Dorsolateral prefrontal cortex (tissue), 120 donors: ENCODE measurements at regions of chr13 and their contacts with region 1.

Region 1: DNA sequence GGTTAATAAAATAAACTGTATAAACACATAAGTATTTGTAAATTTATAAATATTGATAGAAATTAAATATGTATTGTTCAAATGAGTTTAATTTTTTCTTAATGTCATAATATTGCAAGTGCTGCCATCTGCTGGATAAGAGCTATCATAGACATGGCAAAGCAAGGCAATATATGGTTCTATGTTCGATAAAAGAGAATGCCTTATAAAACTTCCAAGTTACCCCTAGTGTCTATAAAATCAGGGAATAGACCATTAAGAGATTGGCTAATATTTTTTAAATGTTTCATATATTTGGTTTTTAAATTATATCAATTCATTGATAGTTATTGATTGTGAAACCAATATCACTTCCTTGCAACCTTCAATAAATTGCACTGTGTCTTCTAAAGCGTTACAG is 28.9 kb upstream of the SLITRK6 start:
- DNase-seq: no peak
- H3K4me3 ChIP-seq: peak overlapping the region in 10 of 59 donors; percentile 7 to 34 (median 24)
- H3K27ac ChIP-seq: no peak overlapping the region
- H3K27me3 ChIP-seq: peaks cover 0 to 4% (median 0%) of the 10 kb centered on the region in 45 donors
- CTCF ChIP-seq: peak; percentile 47 to 83 (median 71)

Region 2: DNA sequence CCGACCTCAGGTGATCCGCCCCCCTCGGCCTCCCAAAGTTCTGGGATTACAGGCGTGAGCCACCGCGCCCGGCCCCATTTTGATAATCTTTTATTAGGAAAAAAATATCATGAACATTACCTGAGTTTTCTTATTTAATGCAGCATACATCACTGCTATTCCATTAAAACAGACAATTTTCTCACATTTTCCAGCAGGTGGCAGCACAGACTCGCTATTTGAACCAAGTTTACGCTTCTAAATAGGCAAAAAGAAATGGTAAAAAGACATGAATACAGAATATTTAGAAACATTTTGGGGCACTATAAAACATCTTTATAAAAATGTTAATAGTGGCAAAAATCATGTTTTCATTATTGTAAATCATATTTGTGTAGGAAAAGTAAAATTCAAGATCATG is 932.0 kb before region 1 on chr13:
- intact Hi-C with region 1: loop called in 1 of 2 experiments (anchors 5 kb)
- DNase-seq: peak in 2 of 10 donors; percentile 28 to 33
- H3K4me3 ChIP-seq: no peak overlapping the region
- H3K27ac ChIP-seq: no peak overlapping the region
- H3K27me3 ChIP-seq: no peaks in the 10 kb centered on the region
- CTCF ChIP-seq: peak; percentile 60 to 85 (median 74)

Region 3: DNA sequence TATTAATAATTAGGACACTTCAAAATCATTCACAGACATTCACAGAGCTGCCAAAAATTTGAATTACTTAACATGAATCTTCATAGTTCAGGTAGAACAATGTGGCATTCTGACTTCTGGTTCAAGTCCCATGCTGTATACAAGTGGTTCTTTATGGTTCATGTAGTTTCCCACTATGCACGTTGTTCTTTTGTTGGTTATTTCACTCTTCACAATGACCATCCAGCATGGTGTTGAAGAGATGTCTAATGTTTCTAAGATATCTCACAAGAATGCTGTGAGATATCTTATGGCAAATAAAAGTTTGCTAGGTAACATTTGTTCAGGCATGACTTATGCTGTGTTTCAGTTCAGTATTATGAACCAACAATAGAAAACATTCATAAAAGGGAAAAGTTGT is 59.3 kb after region 1 on chr13:
- intact Hi-C with region 1: no loop called
- DNase-seq: no peak
- H3K4me3 ChIP-seq: no peak overlapping the region
- H3K27ac ChIP-seq: no peak overlapping the region
- H3K27me3 ChIP-seq: peaks cover 0 to 5% (median 0%) of the 10 kb centered on the region in 45 donors
- CTCF ChIP-seq: no peak

Region 4: DNA sequence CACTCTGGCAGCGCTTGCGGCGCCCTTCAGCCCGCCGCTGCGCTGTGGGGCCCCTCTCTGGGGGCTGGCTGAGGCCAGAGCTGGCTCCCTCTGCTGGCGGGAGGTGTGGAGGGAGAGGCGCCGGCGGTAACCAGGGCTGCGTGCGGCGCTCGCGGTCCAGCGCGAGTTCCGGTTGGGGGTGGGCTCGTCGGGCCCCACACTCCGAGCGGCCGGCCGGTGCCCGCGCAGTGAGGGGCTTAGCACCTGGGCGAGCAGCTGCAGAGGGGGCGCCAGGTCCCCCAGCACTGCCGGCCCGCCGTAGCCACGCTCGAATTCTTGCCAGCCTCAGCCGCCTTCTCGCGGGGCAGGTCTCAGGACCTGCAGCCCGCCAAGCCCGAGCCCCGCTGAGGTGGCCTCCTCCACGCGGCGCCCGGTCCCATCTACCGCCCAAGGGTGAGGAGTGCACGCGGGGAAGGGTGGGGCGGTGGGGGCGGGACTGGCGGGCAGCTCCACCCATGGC is 964.1 kb after region 1 on chr13:
- intact Hi-C with region 1: no loop called
- DNase-seq: no peak
- H3K4me3 ChIP-seq: no peak overlapping the region
- H3K27ac ChIP-seq: no peak overlapping the region
- H3K27me3 ChIP-seq: no peaks in the 10 kb centered on the region
- CTCF ChIP-seq: no peak